PC-9 (cell line): ENCODE measurements at regions of chr5 and their contacts with region 1.

Region 1: GRCh38 chr5:121962347-121962670 is 534 bp downstream of the SRFBP1 start:
- DNase-seq: no peak
- H3K4me3 ChIP-seq: peak overlapping the region; percentile 81
- H3K27ac ChIP-seq: peak overlapping the region; percentile 52
- H3K4me1 ChIP-seq: peaks cover 14% of the 10 kb centered on the region
- H3K27me3 ChIP-seq: no peaks in the 10 kb centered on the region
- CTCF ChIP-seq: no peak

Region 2: GRCh38 chr5:120967366-120967765 is 994.9 kb before region 1 on chr5:
- CTCF ChIA-PET with region 1: interaction called, 13 read pairs
- POLR2A ChIA-PET with region 1: no interaction called
- intact Hi-C with region 1: no loop called
- DNase-seq: no peak
- H3K4me3 ChIP-seq: no peak overlapping the region
- H3K27ac ChIP-seq: no peak overlapping the region
- H3K4me1 ChIP-seq: no peaks in the 10 kb centered on the region
- H3K27me3 ChIP-seq: no peaks in the 10 kb centered on the region
- CTCF ChIP-seq: no peak